ENCODE measurements at regions of chr20 and their contacts with region 1.

Region 1: DNA sequence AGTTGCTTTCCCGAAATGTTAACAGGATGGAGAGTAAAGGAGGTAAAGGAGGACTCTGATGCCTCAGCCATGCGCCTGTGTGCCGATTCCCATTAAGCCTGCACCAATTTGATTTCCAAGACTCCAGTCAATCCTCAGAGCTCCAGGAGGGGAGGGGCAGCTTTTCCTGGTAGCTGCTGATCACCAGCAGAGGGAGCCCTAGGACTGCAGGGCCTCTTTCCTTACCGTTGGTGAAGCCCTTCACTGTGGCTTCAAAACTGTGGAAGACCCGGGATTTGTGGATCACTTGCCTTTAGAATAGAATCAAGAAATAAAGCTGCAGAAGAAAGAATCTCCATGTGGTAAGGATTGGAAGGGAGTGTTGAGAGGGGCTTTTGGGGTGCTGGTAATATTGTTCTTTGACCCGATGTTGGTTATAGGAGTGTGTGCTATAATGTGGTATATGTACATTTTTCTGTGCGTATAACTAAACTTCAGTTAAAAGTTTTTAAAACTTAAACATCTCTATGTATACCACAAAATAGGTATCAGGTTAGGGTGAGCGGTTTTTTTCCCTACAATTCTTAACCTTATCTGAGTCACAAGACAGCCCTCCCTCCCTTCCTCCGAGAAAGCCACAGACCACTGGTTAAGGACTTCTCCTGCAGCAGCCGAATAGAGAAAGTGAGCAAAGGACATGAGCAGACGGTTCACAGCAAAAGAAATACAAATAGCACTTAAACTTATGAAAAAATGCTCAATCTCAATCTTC is 6.9 kb upstream of the OSER1 start:
- DNase-seq: peak; percentile 79 to 91 (median 86)
- H3K4me3 ChIP-seq: peak overlapping the region in 6 of 7 experiments; percentile 27 to 65 (median 40)
- H3K27ac ChIP-seq: no peak overlapping the region
- H3K4me1 ChIP-seq: peaks cover 18 to 32% (median 29%) of the 10 kb centered on the region in 4 experiments
- H3K27me3 ChIP-seq: no peaks in the 10 kb centered on the region

Region 2: DNA sequence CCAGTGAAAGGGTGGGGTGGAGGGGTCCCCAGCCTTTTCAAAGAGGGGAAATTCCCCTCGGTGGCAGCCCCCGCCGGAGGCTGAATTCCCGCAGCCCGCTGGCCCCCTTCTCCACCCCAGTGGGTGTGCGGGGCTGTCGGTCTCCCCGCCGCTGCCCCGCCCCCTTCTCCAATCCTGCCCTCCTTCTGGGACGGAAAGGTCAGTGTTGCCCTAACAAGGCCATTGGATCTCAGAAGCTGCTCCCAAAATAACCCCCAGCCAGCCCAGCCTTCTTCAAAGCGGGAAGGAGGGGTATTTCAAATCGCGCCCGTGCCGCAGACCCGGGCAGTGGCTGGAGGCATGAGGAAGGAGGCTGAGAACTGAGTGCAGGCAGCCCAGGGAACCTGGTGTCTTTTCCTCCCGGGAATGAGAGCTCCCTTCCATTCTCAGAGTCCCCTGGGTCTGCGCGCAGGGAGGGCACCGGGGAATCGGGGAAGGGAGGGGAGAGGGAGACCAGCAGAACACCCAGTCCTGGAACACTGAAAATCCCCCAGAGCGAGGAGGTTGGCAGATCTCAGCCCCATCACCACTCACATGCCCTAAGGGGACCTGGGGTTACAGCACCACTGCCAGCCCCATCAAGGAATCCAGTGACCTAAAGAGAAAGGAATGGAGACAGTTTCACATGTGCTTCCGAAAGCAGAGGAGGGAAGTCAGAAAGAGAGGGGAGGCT is 30.3 kb before region 1 on chr20 and contains the start of gene JPH2:
- CTCF ChIA-PET with region 1: interaction called, 11 read pairs
- POLR2A ChIA-PET with region 1: interaction called, 3 read pairs
- DNase-seq: no peak
- H3K4me3 ChIP-seq: peak within 1 kb of the TSS in 3 of 7 experiments; percentile 16 to 54 (median 32)
- H3K27ac ChIP-seq: no peak within 1 kb of the TSS
- H3K4me1 ChIP-seq: peaks cover 0 to 14% (median 9%) of the 10 kb centered on the region in 4 experiments
- H3K27me3 ChIP-seq: peaks cover 2 to 64% (median 25%) of the 10 kb centered on the region in 5 experiments

Region 3: GRCh38 chr20:44231713-44232468 is 14.4 kb after region 1 on chr20:
- CTCF ChIA-PET with region 1: interaction called, 18 read pairs
- POLR2A ChIA-PET with region 1: no interaction called
- DNase-seq: no peak
- H3K4me3 ChIP-seq: no peak overlapping the region
- H3K27ac ChIP-seq: no peak overlapping the region
- H3K4me1 ChIP-seq: no peaks in the 10 kb centered on the region
- H3K27me3 ChIP-seq: no peaks in the 10 kb centered on the region

Region 4: GRCh38 chr20:44319756-44320422 is 102.4 kb after region 1 on chr20:
- CTCF ChIA-PET with region 1: interaction called, 166 read pairs
- POLR2A ChIA-PET with region 1: interaction called, 3 read pairs
- DNase-seq: peak in 2 of 3 donors; percentile 14 to 25
- H3K4me3 ChIP-seq: no peak overlapping the region
- H3K27ac ChIP-seq: no peak overlapping the region
- H3K4me1 ChIP-seq: no peaks in the 10 kb centered on the region
- H3K27me3 ChIP-seq: peaks cover 0 to 4% (median 0%) of the 10 kb centered on the region in 5 experiments

Region 5: GRCh38 chr20:44460795-44461141 is 243.3 kb after region 1 on chr20:
- CTCF ChIA-PET with region 1: interaction called, 59 read pairs
- POLR2A ChIA-PET with region 1: no interaction called
- DNase-seq: peak; percentile 37 to 63 (median 58)
- H3K4me3 ChIP-seq: no peak overlapping the region
- H3K27ac ChIP-seq: no peak overlapping the region
- H3K4me1 ChIP-seq: peaks cover 0 to 2% (median 0%) of the 10 kb centered on the region in 4 experiments
- H3K27me3 ChIP-seq: peaks cover 0 to 2% (median 0%) of the 10 kb centered on the region in 5 experiments

Measured in common myeloid progenitor, CD34-positive (primary cell).